Right lobe of liver (tissue), 6 donors: ENCODE measurements at regions of chr19 and their contacts with region 1.

Region 1: DNA sequence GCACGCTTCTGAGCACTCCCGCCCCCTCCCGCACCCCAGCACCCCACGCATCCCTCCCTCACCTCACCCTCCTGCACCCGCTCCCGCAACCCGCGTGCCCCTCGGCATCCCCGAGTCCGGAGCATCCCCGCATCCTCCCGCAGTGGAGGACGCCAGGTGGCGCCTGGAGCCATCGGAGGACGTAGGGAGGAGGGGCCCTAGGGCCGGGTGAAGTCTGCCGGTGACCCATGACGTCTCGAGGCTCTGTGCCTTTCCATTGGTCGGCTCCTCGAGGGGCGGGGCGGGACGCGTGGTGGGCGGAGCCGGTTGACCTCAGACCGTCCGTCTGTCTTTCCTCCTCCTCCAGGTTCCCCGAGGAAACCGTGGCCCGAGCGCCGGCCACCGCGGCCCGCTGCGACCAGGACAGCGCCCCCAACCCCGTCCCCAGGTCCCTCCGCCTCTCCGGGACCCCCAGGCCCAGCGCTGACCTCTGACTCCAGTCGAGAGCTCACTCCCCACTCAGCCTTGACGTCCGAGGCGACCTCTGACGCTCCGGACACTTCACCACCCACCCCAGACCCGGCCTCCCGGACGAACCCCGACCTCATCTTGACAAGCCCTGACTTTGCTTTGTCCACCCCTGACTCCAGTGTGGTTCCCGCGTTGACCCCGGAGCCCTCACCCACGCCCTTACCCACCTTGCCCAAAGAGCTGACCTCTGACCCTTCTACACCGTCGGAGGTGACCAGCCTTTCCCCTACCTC is 19.9 kb downstream of the SBK2 start:
- DNase-seq: peak; percentile 94 to 95 (median 94)
- ATAC-seq: peak; percentile 100
- H3K4me3 ChIP-seq: peak overlapping the region; percentile 49 to 60 (median 55)
- H3K27ac ChIP-seq: peak overlapping the region; percentile 81 to 88 (median 87)
- H3K4me1 ChIP-seq: no peaks in the 10 kb centered on the region
- H3K27me3 ChIP-seq: no peaks in the 10 kb centered on the region
- CTCF ChIP-seq: peak; percentile 63 to 94 (median 80)
- POLR2A ChIP-seq: peak; percentile 40

Region 2: DNA sequence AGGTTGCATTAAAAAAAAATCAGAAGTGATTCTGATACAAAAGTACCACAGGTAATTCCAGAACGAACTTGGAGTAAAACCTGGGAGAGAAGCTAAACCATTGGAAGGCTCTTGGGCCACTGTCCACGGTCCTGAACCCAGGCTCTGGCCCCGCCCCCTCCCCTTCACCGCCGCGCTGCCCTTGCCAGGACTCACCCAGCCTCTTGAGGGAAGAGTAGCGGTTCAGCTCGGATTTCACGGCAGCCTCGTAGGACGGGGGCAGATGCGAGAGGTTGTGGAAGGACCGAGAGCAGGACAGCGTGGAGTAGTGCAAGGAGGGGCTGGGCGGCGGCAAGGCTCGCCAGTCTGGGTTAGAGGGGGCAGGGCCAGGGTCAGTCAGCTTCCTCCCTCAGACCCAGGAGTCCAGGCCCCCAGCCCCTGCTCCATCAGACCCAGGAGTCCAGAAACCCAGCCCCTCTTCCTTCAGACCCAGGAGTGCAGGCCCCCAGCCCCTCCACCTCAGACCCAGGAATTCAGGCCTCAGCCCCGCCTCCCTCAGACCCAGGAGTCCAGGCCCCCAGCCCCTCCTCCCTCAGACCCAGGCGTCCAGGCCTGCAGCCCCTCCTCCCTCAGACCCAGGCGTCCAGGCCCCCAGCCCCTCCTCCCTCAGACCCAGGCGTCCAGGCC is 79.5 kb before region 1 on chr19:
- intact Hi-C with region 1: no loop called
- DNase-seq: no peak
- ATAC-seq: peak; percentile 63 to 87 (median 77)
- H3K4me3 ChIP-seq: no peak overlapping the region
- H3K27ac ChIP-seq: no peak overlapping the region
- H3K4me1 ChIP-seq: no peaks in the 10 kb centered on the region
- H3K27me3 ChIP-seq: peaks cover 0 to 10% of the 10 kb centered on the region in 2 donors
- CTCF ChIP-seq: no peak
- POLR2A ChIP-seq: no peak

Region 3: GRCh38 chr19:55605207-55605636 is 88.2 kb after region 1 on chr19:
- intact Hi-C with region 1: loop called in 1 of 2 experiments (anchors 5 kb)
- DNase-seq: peak; percentile 97 to 98 (median 97)
- ATAC-seq: peak; percentile 81 to 87 (median 84)
- H3K4me3 ChIP-seq: peak overlapping the region; percentile 50 to 81 (median 77)
- H3K27ac ChIP-seq: peak overlapping the region; percentile 76 to 83 (median 79)
- H3K4me1 ChIP-seq: peaks cover 0 to 13% (median 5%) of the 10 kb centered on the region in 4 donors
- H3K27me3 ChIP-seq: no peaks in the 10 kb centered on the region
- CTCF ChIP-seq: no peak
- POLR2A ChIP-seq: no peak

Region 4: DNA sequence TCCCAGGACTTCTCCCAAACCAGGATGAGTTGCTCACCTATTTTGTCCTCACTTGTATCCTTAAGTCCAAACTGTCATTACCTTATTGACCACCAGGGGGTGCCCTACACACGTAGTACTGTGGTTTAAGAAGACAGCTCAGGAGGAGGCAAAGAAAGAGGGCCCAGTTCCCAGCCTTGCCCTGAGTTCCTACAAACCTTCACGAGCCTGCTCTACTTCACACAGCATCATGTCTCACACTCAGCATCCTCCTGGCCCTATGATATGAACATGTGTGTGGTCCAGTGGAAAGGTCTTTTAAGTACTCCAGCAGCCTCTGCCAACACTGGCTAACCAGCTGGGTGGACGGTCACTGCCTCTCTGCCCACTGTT is 115.4 kb after region 1 on chr19:
- intact Hi-C with region 1: loop called in 1 of 2 experiments (anchors 5 kb)
- DNase-seq: peak in 1 of 3 donors; percentile 88
- ATAC-seq: peak; percentile 69 to 82 (median 78)
- H3K4me3 ChIP-seq: no peak overlapping the region
- H3K27ac ChIP-seq: no peak overlapping the region
- H3K4me1 ChIP-seq: peaks cover 0 to 26% (median 13%) of the 10 kb centered on the region in 4 donors
- H3K27me3 ChIP-seq: no peaks in the 10 kb centered on the region
- CTCF ChIP-seq: peak; percentile 84 to 93 (median 86)
- POLR2A ChIP-seq: no peak